ENCODE measurements at regions of chr4 and their contacts with region 1.

Region 1: GRCh38 chr4:3074078-3074795 is at the starts of genes HTT and HTT-AS:
- DNase-seq: peak; percentile 91 to 99 (median 96)
- ATAC-seq: peak; percentile 90
- H3K4me3 ChIP-seq: peak within 1 kb of the TSS; percentile 87
- H3K4me3 Mint-ChIP-seq: peak within 1 kb of the TSS; percentile 86 to 98 (median 90)
- H3K27ac ChIP-seq: peak within 1 kb of the TSS; percentile 89
- H3K27ac Mint-ChIP-seq: peak within 1 kb of the TSS; percentile 70 to 95 (median 93)
- H3K4me1 ChIP-seq: peaks cover 10 to 16% of the 10 kb centered on the region in 2 donors
- H3K4me1 Mint-ChIP-seq: peaks cover 17 to 35% (median 30%) of the 10 kb centered on the region in 7 donors
- H3K27me3 ChIP-seq: no peaks in the 10 kb centered on the region
- H3K27me3 Mint-ChIP-seq: no peaks in the 10 kb centered on the region
- total RNA-seq, gene HTT: 61.4 to 115 (median 72.5) TPM
- total RNA-seq, gene HTT-AS: not detected

Region 2: DNA sequence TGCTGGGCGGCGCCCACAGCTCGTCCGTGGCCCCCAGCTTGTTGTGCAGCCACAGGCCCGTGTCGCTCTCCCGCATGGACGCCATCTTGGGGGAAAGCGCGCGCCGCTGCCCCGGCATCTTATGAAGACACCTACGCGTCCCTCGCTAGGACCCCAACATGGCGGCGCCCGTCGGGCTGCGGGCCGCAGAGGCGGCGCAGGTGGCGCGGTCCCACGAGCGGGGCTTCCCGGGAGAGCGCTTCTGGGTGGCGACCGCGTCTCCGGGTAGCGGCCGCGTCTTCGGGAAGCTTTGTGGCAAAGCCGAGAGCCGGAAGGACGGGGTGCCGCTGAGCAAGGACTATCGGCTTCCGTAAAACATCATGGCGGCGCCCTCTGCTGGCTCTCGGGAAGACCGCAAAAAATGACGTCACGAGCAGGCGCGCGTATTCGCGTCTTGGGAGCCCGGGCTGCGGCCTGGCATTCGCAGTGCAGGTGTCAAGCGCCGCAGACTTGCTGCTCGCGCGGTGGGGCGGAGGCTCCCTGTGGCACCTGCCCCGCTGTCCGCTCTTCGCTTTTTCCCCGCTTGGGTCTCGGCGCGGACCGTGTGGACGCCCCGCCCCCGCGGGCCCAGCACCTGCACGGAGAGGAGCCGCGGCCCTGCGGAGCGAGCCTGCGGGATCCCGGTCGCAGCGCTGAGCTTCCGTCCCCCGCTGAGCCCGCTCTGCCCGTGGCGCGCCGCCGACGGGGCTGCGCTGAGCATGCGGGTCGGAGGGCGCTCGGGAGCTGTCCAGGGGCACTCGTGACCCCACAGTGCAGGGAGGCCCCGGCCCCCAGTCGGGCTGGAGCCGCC is 1065.1 kb before region 1 on chr4 and contains the start of gene NELFA:
- CTCF ChIA-PET with region 1: no interaction called
- POLR2A ChIA-PET with region 1: no interaction called
- intact Hi-C with region 1: loop called in 1 of 2 experiments (anchors 2 kb)
- DNase-seq: peak; percentile 92 to 98 (median 96)
- ATAC-seq: peak; percentile 93
- H3K4me3 ChIP-seq: peak within 1 kb of the TSS; percentile 96
- H3K4me3 Mint-ChIP-seq: peak within 1 kb of the TSS; percentile 81 to 96 (median 94)
- H3K27ac ChIP-seq: peak within 1 kb of the TSS; percentile 99
- H3K27ac Mint-ChIP-seq: peak within 1 kb of the TSS; percentile 91 to 99 (median 96)
- H3K4me1 ChIP-seq: peaks cover 13 to 24% of the 10 kb centered on the region in 2 donors
- H3K4me1 Mint-ChIP-seq: peaks cover 30 to 38% (median 34%) of the 10 kb centered on the region in 7 donors
- H3K27me3 ChIP-seq: no peaks in the 10 kb centered on the region
- H3K27me3 Mint-ChIP-seq: peaks cover 0 to 20% (median 0%) of the 10 kb centered on the region in 5 donors
- total RNA-seq, gene NELFA: 32.7 to 50.1 (median 43.6) TPM

Region 3: GRCh38 chr4:2755837-2756694 is 318.2 kb before region 1 on chr4 and contains the start of gene TNIP2:
- CTCF ChIA-PET with region 1: no interaction called
- POLR2A ChIA-PET with region 1: no interaction called
- intact Hi-C with region 1: loop called in 1 of 2 experiments (anchors 1 kb)
- DNase-seq: peak; percentile 65 to 85 (median 74)
- ATAC-seq: peak; percentile 90
- H3K4me3 ChIP-seq: peak within 1 kb of the TSS; percentile 64
- H3K4me3 Mint-ChIP-seq: peak within 1 kb of the TSS; percentile 75 to 93 (median 87)
- H3K27ac ChIP-seq: peak within 1 kb of the TSS; percentile 91
- H3K27ac Mint-ChIP-seq: peak within 1 kb of the TSS; percentile 54 to 94 (median 86)
- H3K4me1 ChIP-seq: peaks cover 9 to 12% of the 10 kb centered on the region in 2 donors
- H3K4me1 Mint-ChIP-seq: peaks cover 22 to 29% (median 26%) of the 10 kb centered on the region in 7 donors
- H3K27me3 ChIP-seq: no peaks in the 10 kb centered on the region
- H3K27me3 Mint-ChIP-seq: no peaks in the 10 kb centered on the region
- total RNA-seq, gene TNIP2: 39.4 to 56.0 (median 43.6) TPM

Region 4: DNA sequence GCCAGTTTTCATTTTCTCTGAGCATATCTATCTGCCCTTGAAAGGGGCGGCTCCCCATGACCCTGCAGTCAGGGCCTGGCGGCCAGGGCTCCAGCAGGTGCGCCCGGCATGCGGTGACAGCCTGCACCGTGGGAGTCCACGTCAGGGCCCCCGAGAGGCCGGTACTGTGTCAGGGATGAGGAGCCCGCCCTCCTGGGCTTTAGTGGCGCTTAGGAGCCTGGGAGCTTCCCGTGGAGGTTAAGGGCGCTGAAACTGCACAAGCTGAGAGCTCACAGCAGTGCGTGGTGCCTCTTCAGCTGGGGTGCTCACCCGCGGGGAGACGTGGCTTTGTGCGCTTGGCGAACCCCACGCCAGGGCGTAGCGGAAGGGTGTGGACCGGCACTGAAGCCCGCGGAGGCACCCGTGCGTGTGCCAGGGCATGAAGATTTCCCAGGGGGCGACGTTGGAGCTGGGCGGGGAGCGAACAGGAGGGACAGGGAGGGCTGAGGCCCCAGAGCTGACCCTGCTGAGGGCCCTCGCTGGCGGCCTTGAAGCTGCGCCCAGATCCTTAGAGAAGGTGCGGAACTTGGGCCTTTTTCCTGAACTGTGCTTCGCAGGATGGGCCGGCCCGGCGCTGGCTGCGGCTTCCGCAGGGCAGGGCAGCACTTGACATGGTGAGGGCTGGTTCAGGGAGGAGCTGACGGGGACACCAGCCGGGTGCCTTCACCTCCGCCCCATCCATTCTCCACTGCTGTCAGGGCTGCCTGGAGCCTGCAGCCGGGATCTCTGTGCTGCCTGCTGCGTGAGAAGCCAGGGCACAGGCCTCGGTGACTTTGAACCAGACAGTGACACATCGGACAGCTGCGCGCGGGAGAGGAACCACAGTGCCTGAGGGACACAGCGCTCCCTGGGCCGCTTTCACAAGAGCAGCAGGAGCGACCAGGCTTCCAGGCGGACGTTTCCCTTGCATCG is 32.8 kb before region 1 on chr4:
- CTCF ChIA-PET with region 1: no interaction called
- POLR2A ChIA-PET with region 1: interaction called, 9 read pairs
- intact Hi-C with region 1: loop called (anchors 1 to 5 kb)
- DNase-seq: peak in 8 of 9 donors; percentile 30 to 40 (median 36)
- ATAC-seq: peak; percentile 55
- H3K4me3 ChIP-seq: peak overlapping the region; percentile 66
- H3K4me3 Mint-ChIP-seq: peak overlapping the region; percentile 83 to 98 (median 89)
- H3K27ac ChIP-seq: peak overlapping the region; percentile 54
- H3K27ac Mint-ChIP-seq: peak overlapping the region in 8 of 9 donors; percentile 43 to 88 (median 84)
- H3K4me1 ChIP-seq: peaks cover 38 to 39% of the 10 kb centered on the region in 2 donors
- H3K4me1 Mint-ChIP-seq: peaks cover 40 to 72% (median 59%) of the 10 kb centered on the region in 7 donors
- H3K27me3 ChIP-seq: no peaks in the 10 kb centered on the region
- H3K27me3 Mint-ChIP-seq: peaks cover 0 to 6% (median 0%) of the 10 kb centered on the region in 5 donors

Region 5: GRCh38 chr4:3292571-3293400 is 218.5 kb after region 1 on chr4 and contains the start of gene RGS12:
- CTCF ChIA-PET with region 1: no interaction called
- POLR2A ChIA-PET with region 1: no interaction called
- intact Hi-C with region 1: loop called (anchors 1 kb)
- DNase-seq: peak; percentile 65 to 91 (median 75)
- ATAC-seq: peak; percentile 91
- H3K4me3 ChIP-seq: peak within 1 kb of the TSS; percentile 79
- H3K4me3 Mint-ChIP-seq: peak within 1 kb of the TSS; percentile 86 to 98 (median 92)
- H3K27ac ChIP-seq: peak within 1 kb of the TSS; percentile 69
- H3K27ac Mint-ChIP-seq: peak within 1 kb of the TSS; percentile 68 to 93 (median 82)
- H3K4me1 ChIP-seq: peaks cover 5 to 8% of the 10 kb centered on the region in 2 donors
- H3K4me1 Mint-ChIP-seq: peaks cover 12 to 37% (median 33%) of the 10 kb centered on the region in 7 donors
- H3K27me3 ChIP-seq: no peaks in the 10 kb centered on the region
- H3K27me3 Mint-ChIP-seq: peaks cover 0 to 67% (median 0%) of the 10 kb centered on the region in 5 donors
- total RNA-seq, gene RGS12: 2.5 to 13.3 (median 7.5) TPM

Measured in naive thymus-derived CD4-positive, alpha-beta T cell (primary cell).